IMR-90 (cell line): ENCODE measurements at regions of chr14 and their contacts with region 1.

Region 1: DNA sequence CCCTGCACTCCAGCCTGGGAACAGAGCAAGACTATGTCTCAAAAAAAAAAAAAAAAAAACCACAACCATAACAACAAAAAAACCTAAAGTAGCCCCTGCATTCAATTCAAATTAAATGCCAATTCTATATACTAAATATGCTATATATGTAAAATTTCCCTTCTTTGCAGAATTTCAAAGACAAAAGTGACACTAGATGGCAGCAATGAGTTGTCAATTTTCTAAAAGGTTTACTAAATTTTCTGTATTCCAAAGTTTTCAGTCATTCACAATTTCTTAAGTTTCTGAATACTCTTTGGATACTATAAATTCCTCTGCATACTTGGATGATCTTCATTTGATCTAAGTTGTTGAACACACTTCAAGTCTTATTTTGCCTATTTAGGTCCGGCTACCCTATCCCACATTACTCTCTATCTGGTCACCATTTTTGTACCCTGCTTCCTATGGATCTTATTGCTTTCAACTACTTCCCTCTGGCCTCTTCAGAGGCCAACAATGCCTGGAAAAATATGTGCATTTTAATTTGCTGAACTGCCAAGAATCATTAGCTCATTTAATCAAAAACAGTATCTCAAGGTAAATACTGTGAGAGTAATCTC is 27.9 kb downstream of the HNRNPC start:
- DNase-seq: peak; percentile 38
- ATAC-seq: peak; percentile 8; the same call in 1 of the 2 replicates
- H3K4me3 ChIP-seq: no peak overlapping the region
- H3K27ac ChIP-seq: no peak overlapping the region
- H3K4me1 ChIP-seq: peaks cover 1% of the 10 kb centered on the region
- H3K27me3 ChIP-seq: no peaks in the 10 kb centered on the region
- CTCF ChIP-seq: peak; percentile 40
- POLR2A ChIP-seq: no peak
- RAD21 ChIP-seq: peak; percentile 25

Region 2: DNA sequence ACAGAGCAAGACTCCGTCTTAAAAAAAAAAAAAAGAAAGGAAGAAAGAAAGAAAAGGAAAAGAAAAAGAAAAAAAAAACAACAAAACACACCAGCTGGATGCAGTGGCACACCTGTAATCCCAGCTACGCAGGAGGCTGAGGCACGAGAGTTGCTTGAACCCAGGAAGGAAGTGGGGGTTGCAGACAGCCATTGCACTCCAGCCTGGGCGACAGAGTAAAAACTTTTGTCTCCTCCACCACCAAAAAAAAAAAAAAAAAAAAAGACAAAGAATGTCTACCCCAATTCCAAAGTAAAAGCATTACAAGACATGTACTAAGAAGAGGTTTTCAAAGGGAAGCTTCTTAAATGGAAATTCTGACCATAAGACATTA is 25.5 kb before region 1 on chr14:
- CTCF ChIA-PET with region 1: no interaction called
- POLR2A ChIA-PET with region 1: interaction called, 11 read pairs
- dilution Hi-C with region 1: no loop called
- in situ Hi-C with region 1: no loop called
- intact Hi-C with region 1: no loop called
- DNase-seq: no peak
- ATAC-seq: no peak
- H3K4me3 ChIP-seq: no peak overlapping the region
- H3K27ac ChIP-seq: no peak overlapping the region
- H3K4me1 ChIP-seq: peaks cover 14% of the 10 kb centered on the region
- H3K27me3 ChIP-seq: no peaks in the 10 kb centered on the region
- CTCF ChIP-seq: no peak
- POLR2A ChIP-seq: no peak
- RAD21 ChIP-seq: no peak